HAP-1 (cell line): ENCODE measurements at regions of chr16 and their contacts with region 1.

Region 1: DNA sequence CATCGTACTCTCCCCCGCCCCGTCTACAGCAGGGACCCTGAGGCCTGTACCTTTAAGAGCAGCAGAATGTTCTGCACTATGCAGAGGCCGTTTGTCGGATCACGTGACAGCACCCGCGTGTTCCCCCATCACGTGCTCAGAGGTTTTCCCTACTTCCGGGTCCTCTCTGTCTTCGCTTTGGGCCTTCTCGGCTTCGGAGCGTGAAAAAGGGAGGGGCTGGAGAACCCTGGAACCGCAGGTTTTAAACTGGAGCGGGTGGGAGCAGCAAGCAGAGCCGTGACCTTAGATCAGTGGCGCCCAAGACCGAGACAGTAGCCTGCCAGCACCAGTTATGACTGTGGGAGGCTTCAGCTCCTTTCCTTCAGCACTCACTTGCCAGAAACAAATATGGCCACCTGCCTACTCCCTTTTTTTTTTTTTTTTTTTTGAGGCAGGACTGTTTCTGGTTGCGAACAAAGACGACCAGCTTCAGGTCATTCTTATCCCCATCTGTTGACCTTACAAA is at the start of gene CLN3:
- DNase-seq: peak; percentile 93
- H3K4me3 ChIP-seq: peak within 1 kb of the TSS; percentile 82
- H3K4me1 ChIP-seq: peaks cover 5% of the 10 kb centered on the region
- H3K27me3 ChIP-seq: no peaks in the 10 kb centered on the region; the same call in 1 of the 2 replicates

Region 2: DNA sequence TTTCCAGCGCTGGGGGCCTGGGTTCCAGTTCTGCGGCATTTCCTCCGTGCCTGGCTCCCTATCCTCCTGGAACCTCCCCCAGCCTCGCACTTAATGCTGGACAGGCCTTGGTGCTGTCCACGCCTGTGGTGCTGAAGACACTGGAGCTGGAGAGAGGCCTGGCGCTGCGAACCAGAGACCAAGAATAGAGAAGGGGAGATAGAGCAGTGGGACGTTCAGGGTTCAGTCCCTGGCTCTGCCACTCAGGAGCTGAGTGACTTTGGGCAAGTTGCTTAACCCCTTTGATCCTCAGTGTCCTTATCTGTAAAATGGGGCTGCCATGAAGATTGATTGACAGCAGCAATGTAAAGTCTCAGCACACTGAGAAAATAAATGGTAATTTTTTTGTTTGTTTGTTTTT is 187.8 kb before region 1 on chr16:
- in situ Hi-C with region 1: no loop called
- DNase-seq: peak in 1 of 2 experiments; percentile 69
- H3K4me3 ChIP-seq: no peak overlapping the region
- H3K4me1 ChIP-seq: no peaks in the 10 kb centered on the region
- H3K27me3 ChIP-seq: no peaks in the 10 kb centered on the region

Region 3: DNA sequence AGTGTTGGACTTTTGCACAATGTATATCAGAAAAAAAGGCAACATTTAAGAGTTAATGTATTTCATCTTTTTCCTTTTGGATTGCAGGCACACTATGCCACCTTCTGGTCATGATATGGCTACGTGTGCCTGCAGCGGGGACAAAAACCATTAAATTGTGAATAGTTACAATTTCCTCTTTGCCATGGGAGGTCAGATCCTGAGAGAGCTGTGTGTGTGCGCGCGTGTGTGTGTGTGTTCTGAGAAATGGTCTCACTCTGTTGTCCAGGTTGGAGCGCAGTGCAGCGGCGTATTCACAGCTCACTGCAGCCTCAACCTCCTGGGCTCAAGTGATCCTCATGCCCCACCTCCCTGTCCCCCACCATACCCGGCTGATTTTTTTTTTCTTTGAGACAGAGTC is 57.4 kb after region 1 on chr16:
- in situ Hi-C with region 1: no loop called
- DNase-seq: no peak
- H3K4me3 ChIP-seq: no peak overlapping the region
- H3K4me1 ChIP-seq: peaks cover 8% of the 10 kb centered on the region
- H3K27me3 ChIP-seq: no peaks in the 10 kb centered on the region

Region 4: GRCh38 chr16:28823872-28824716 is 332.1 kb after region 1 on chr16:
- in situ Hi-C with region 1: loop called (anchors 25 kb)
- DNase-seq: peak; percentile 98 to 99
- H3K4me3 ChIP-seq: peak overlapping the region; percentile 91
- H3K4me1 ChIP-seq: peaks cover 11% of the 10 kb centered on the region
- H3K27me3 ChIP-seq: no peaks in the 10 kb centered on the region